CD4-positive, alpha-beta memory T cell (primary cell): ENCODE measurements at regions of chr2 and their contacts with region 1.

Region 1: DNA sequence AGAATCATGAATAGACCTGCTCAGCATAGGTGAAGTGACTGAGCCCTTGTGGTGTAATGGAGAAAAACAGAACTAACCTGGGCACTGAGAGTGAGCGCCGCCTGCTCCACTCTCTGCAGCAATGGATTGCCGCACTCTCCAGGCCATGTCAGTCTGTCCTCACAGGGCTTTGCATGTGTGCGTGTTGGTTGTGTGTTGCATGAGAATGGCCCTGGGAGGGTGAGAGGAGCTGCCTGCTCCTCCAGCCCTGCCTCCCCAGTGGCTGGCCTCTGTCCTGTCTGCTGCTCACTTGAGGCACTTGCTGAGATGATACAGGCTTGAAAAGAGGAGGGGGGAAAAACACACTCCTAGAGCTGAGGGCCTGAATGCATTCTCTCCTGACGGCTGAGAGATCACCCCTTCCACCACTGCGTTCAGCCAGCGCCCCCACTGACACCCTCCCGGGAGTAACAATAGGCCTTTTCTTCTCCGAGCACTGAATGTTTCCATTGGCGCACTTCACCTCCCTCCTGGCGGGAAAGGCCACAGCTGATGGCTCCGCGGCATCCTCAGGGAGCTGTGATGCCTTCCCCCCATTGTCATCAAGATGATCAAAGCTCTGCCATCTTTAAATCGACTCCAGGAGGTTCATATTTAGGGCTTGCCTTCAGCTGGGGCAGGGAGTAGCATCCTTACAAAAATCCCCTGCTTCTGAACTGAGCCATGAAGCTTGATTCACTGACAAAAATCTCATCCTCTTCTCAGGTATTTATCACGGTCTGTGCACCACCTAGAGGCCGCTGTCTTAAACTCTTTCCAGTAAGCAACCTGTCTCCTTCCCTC is 49.9 kb upstream of the DAPL1 start:
- DNase-seq: peak in 4 of 5 donors; percentile 20 to 32 (median 24)
- H3K4me3 ChIP-seq: no peak overlapping the region
- H3K4me3 Mint-ChIP-seq: no peak overlapping the region
- H3K27ac ChIP-seq: no peak overlapping the region
- H3K27ac Mint-ChIP-seq: no peak overlapping the region
- H3K4me1 ChIP-seq: no peaks in the 10 kb centered on the region
- H3K4me1 Mint-ChIP-seq: no peaks in the 10 kb centered on the region
- H3K27me3 ChIP-seq: no peaks in the 10 kb centered on the region
- H3K27me3 Mint-ChIP-seq: peaks cover 21 to 26% of the 10 kb centered on the region in 2 donors

Region 2: GRCh38 chr2:158179660-158180059 is 565.6 kb before region 1 on chr2:
- CTCF ChIA-PET with region 1: interaction called, 18 read pairs
- POLR2A ChIA-PET with region 1: no interaction called
- intact Hi-C with region 1: no loop called
- DNase-seq: no peak
- H3K4me3 ChIP-seq: no peak overlapping the region
- H3K4me3 Mint-ChIP-seq: no peak overlapping the region
- H3K27ac ChIP-seq: no peak overlapping the region
- H3K27ac Mint-ChIP-seq: no peak overlapping the region
- H3K4me1 ChIP-seq: no peaks in the 10 kb centered on the region
- H3K4me1 Mint-ChIP-seq: no peaks in the 10 kb centered on the region
- H3K27me3 ChIP-seq: no peaks in the 10 kb centered on the region
- H3K27me3 Mint-ChIP-seq: peaks cover 5 to 9% of the 10 kb centered on the region in 2 donors

Region 3: DNA sequence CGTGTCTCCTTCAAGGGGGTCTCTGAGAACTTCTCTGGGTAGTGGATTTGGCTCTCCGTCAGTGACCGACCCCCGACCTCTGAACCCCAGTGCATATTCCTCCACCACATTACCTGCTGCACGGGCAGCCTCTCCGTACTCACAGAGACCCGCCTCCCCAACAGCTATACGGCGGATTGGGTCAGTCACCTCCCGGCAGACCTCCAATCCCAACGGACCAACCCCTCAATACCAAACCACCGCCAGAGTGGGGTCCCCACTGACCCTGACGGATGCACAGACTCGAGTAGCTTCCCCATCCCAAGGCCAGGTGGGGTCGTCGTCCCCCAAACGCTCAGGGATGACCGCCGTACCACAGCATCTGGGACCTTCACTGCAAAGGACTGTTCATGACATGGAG is 120.3 kb before region 1 on chr2:
- CTCF ChIA-PET with region 1: no interaction called
- POLR2A ChIA-PET with region 1: no interaction called
- intact Hi-C with region 1: no loop called
- DNase-seq: peak in 1 of 5 donors; percentile 29
- H3K4me3 ChIP-seq: no peak overlapping the region
- H3K4me3 Mint-ChIP-seq: no peak overlapping the region
- H3K27ac ChIP-seq: no peak overlapping the region
- H3K27ac Mint-ChIP-seq: peak overlapping the region in 1 of 7 donors; percentile 13
- H3K4me1 ChIP-seq: no peaks in the 10 kb centered on the region
- H3K4me1 Mint-ChIP-seq: no peaks in the 10 kb centered on the region
- H3K27me3 ChIP-seq: no peaks in the 10 kb centered on the region
- H3K27me3 Mint-ChIP-seq: no peaks in the 10 kb centered on the region

Region 4: DNA sequence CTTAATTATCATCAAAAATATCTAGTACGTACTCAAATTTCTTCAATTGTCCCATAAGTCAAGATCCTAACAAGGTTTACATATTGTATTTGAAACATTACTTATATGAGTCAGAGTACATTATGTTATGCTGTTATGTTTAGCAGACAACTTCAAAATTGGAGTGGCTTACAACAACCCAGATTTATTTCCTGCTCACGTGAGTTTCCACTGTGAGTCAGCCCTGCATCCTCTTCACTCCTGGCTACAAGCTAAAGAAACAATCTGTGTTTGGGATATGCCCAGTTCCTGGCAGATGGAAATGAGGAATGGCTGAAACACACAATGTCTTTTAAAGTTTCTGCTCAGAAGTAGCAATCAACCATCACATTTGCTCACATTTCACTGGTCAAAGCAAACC is 191.7 kb after region 1 on chr2:
- CTCF ChIA-PET with region 1: no interaction called
- POLR2A ChIA-PET with region 1: no interaction called
- intact Hi-C with region 1: no loop called
- DNase-seq: no peak
- H3K4me3 ChIP-seq: no peak overlapping the region
- H3K4me3 Mint-ChIP-seq: no peak overlapping the region
- H3K27ac ChIP-seq: no peak overlapping the region
- H3K27ac Mint-ChIP-seq: no peak overlapping the region
- H3K4me1 ChIP-seq: no peaks in the 10 kb centered on the region
- H3K4me1 Mint-ChIP-seq: no peaks in the 10 kb centered on the region
- H3K27me3 ChIP-seq: no peaks in the 10 kb centered on the region
- H3K27me3 Mint-ChIP-seq: peaks cover 0 to 5% of the 10 kb centered on the region in 2 donors